Mammary epithelial cell (primary cell): ENCODE measurements at regions of chr2 and their contacts with region 1.

Region 1: GRCh38 chr2:28751252-28751955 is at the start of gene PPP1CB:
- DNase-seq: peak; percentile 97
- H3K4me3 ChIP-seq: peak within 1 kb of the TSS; percentile 93 to 97 (median 93)
- H3K27ac ChIP-seq: peak within 1 kb of the TSS; percentile 93
- H3K4me1 ChIP-seq: peaks cover 30% of the 10 kb centered on the region
- H3K27me3 ChIP-seq: no peaks in the 10 kb centered on the region
- CTCF ChIP-seq: peak in 1 of 2 donors; percentile 45
- total RNA-seq, gene PPP1CB: 266 to 282 TPM

Region 2: GRCh38 chr2:28566521-28567041 is 184.8 kb before region 1 on chr2:
- CTCF ChIA-PET with region 1: no interaction called
- dilution Hi-C with region 1: no loop called
- in situ Hi-C with region 1: loop called (anchors 5 to 10 kb)
- intact Hi-C with region 1: loop called (anchors 1 kb)
- DNase-seq: peak; percentile 70
- H3K4me3 ChIP-seq: peak overlapping the region; percentile 46 to 62 (median 55)
- H3K27ac ChIP-seq: peak overlapping the region; percentile 63
- H3K4me1 ChIP-seq: peaks cover 33% of the 10 kb centered on the region
- H3K27me3 ChIP-seq: no peaks in the 10 kb centered on the region
- CTCF ChIP-seq: peak; percentile 96 to 100

Region 3: DNA sequence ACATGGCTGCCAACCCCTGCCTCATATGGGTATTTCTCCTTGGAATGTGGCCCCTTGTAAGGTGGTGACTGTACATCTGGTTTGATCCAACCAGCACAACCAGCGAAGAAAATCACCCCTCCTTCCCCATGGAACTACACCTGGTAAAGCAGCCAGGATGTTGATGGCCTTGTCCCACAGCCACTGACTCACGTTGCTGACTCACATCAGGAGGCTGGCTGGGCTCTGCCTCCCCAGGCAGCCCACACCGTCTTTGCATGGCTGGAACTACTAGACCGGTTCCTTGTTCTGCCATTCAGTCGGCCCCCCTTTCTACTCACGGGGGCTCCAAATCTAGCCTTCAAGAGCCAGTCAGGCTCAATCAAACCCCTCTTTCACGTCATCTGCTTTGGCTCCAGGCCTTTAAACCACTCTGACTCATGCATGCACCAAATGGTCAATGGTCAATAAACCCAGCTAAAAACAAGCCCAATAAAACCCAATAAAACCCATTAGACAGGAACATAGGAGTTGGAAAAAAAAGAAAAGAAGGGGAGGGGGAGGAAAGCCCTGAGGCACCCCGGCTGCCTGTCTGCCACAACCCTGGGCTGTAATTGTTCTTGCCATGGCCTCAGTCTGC is 140.7 kb before region 1 on chr2:
- CTCF ChIA-PET with region 1: no interaction called
- dilution Hi-C with region 1: loop called (anchors 5 kb)
- in situ Hi-C with region 1: no loop called
- intact Hi-C with region 1: loop called (anchors 1 kb)
- DNase-seq: peak; percentile 98
- H3K4me3 ChIP-seq: no peak overlapping the region
- H3K27ac ChIP-seq: peak overlapping the region; percentile 71
- H3K4me1 ChIP-seq: peaks cover 52% of the 10 kb centered on the region
- H3K27me3 ChIP-seq: no peaks in the 10 kb centered on the region
- CTCF ChIP-seq: no peak

Region 4: GRCh38 chr2:28643911-28644334 is 107.5 kb before region 1 on chr2:
- CTCF ChIA-PET with region 1: no interaction called
- dilution Hi-C with region 1: no loop called
- in situ Hi-C with region 1: no loop called
- intact Hi-C with region 1: loop called (anchors 5 kb)
- DNase-seq: peak; percentile 93
- H3K4me3 ChIP-seq: no peak overlapping the region
- H3K27ac ChIP-seq: peak overlapping the region; percentile 96
- H3K4me1 ChIP-seq: peaks cover 40% of the 10 kb centered on the region
- H3K27me3 ChIP-seq: no peaks in the 10 kb centered on the region
- CTCF ChIP-seq: no peak

Region 5: GRCh38 chr2:28716265-28716867 is 35.0 kb before region 1 on chr2:
- CTCF ChIA-PET with region 1: no interaction called
- dilution Hi-C with region 1: no loop called
- in situ Hi-C with region 1: no loop called
- intact Hi-C with region 1: loop called (anchors 1 kb)
- DNase-seq: peak; percentile 95
- H3K4me3 ChIP-seq: peak overlapping the region in 1 of 3 experiments; percentile 0
- H3K27ac ChIP-seq: peak overlapping the region; percentile 64
- H3K4me1 ChIP-seq: peaks cover 31% of the 10 kb centered on the region
- H3K27me3 ChIP-seq: no peaks in the 10 kb centered on the region
- CTCF ChIP-seq: no peak

Region 6: DNA sequence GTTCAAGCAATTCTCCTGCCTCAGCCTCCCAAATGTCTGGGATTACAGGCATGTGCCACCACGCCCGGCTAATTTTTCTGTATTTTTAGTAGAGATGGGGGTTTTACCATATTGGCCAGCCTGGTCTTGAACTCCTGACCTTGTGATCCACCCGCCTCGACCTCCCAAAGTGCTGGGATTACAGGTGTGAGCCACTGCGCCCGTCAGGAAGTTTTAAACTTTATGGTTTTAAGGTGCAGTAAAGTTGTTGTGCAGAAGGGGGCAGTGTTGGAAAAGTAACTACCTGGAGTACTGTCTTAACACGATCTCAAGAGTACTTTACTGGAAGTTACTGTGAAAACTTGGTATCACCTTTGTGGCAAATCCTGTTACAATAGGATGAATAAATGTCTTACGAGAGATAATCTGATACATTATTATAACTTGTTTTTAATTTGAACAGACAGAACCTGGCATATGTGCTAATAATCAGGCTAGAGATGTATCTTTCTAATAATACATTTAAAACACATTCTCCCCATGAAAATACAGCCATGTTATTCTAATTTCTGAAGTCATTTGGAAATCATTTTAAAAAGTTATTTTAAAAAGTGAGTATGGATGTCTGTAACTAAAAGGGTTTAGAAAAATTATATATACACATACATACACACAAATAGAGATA is 70.0 kb after region 1 on chr2:
- CTCF ChIA-PET with region 1: no interaction called
- dilution Hi-C with region 1: no loop called
- in situ Hi-C with region 1: no loop called
- intact Hi-C with region 1: no loop called
- DNase-seq: peak; percentile 64
- H3K4me3 ChIP-seq: no peak overlapping the region
- H3K27ac ChIP-seq: no peak overlapping the region
- H3K4me1 ChIP-seq: no peaks in the 10 kb centered on the region
- H3K27me3 ChIP-seq: no peaks in the 10 kb centered on the region
- CTCF ChIP-seq: peak; percentile 46 to 67